ENCODE measurements at regions of chr7 and their contacts with region 1.

Region 1: DNA sequence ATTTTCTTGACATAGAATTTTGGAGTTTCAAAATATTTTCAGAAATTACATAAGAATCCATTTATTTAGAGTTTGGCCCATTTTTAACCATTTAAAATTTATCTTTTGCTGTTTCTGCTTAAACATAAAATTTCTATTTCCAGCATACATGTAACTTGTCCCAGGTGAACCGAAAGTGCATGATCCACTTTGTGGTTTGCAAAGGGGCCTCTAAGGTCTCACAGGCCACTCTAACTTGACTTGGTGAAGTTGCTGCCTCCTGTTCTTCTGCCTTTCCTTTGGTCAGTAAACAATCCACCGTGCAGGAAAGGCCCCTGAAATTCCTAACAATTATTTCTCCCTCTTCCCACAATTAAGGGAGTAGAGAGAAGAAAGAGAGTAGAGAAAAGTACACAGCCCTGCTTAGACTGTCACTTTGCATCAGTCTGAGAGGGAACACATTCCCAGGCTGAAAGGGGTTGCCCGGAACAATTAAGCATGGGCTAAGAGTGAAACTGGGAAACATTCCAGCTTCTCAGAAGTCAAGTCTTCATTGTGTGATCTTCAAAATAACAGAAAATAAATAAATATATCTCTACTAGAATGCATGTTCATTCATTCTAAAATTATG is 79.5 kb upstream of the SEMA3A start:
- DNase-seq: no peak
- ATAC-seq: no peak
- H3K4me3 ChIP-seq: no peak overlapping the region
- H3K27ac ChIP-seq: no peak overlapping the region
- H3K4me1 ChIP-seq: no peaks in the 10 kb centered on the region
- H3K27me3 ChIP-seq: no peaks in the 10 kb centered on the region
- CTCF ChIP-seq: no peak

Region 2: GRCh38 chr7:84176716-84177115 is 97.4 kb before region 1 on chr7:
- intact Hi-C with region 1: no loop called
- DNase-seq: no peak
- ATAC-seq: peak in 2 of 8 donors; percentile 42 to 70
- H3K4me3 ChIP-seq: no peak overlapping the region
- H3K27ac ChIP-seq: no peak overlapping the region
- H3K4me1 ChIP-seq: no peaks in the 10 kb centered on the region
- H3K27me3 ChIP-seq: no peaks in the 10 kb centered on the region
- CTCF ChIP-seq: no peak

Region 3: GRCh38 chr7:84218681-84219080 is 55.5 kb before region 1 on chr7:
- intact Hi-C with region 1: loop called in 1 of 10 experiments (anchors 10 kb)
- DNase-seq: no peak
- ATAC-seq: no peak
- H3K4me3 ChIP-seq: no peak overlapping the region
- H3K27ac ChIP-seq: no peak overlapping the region
- H3K4me1 ChIP-seq: peaks cover 0 to 7% (median 0%) of the 10 kb centered on the region in 9 donors
- H3K27me3 ChIP-seq: no peaks in the 10 kb centered on the region
- CTCF ChIP-seq: no peak

Region 4: DNA sequence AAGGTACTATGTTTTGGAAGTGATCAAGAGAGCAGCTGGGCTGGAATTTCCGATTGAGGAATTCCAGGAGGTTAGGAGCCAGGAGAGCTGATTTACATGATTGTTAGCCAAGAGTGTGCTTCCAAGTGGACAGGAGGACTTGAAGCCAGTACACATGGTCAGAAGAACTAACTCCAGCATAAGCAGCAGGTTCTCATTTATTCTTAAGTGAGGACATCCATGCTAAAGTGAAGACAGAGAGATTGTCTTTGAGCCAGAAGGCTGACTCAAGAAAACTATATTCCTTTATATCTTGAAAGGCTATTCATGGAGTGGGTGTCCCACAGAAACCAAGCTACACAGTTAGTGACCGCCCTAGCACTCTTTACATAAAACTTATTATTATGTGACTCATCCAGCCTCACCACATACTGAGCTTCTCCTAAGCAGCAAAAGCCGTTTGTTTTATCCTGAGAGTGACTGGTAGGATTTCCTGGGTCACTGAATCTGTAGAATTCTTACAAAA is 22.8 kb before region 1 on chr7:
- intact Hi-C with region 1: loop called in 1 of 10 experiments (anchors 2 kb)
- DNase-seq: no peak
- ATAC-seq: no peak
- H3K4me3 ChIP-seq: no peak overlapping the region
- H3K27ac ChIP-seq: no peak overlapping the region
- H3K4me1 ChIP-seq: peaks cover 0 to 26% (median 0%) of the 10 kb centered on the region in 9 donors
- H3K27me3 ChIP-seq: no peaks in the 10 kb centered on the region
- CTCF ChIP-seq: no peak